ENCODE measurements at regions of chr2 and their contacts with region 1.

Region 1: GRCh38 chr2:26033818-26034636 is at the start of gene RAB10:
- DNase-seq: peak; percentile 99
- ATAC-seq: peak; percentile 94
- H3K4me3 Mint-ChIP-seq: peak within 1 kb of the TSS; percentile 90
- H3K27ac Mint-ChIP-seq: peak within 1 kb of the TSS; percentile 92
- H3K4me1 Mint-ChIP-seq: peaks cover 39% of the 10 kb centered on the region
- H3K27me3 Mint-ChIP-seq: no peaks in the 10 kb centered on the region
- CTCF ChIP-seq: no peak
- total RNA-seq, gene RAB10: 79.3 and 94.6 TPM in 2 replicates

Region 2: DNA sequence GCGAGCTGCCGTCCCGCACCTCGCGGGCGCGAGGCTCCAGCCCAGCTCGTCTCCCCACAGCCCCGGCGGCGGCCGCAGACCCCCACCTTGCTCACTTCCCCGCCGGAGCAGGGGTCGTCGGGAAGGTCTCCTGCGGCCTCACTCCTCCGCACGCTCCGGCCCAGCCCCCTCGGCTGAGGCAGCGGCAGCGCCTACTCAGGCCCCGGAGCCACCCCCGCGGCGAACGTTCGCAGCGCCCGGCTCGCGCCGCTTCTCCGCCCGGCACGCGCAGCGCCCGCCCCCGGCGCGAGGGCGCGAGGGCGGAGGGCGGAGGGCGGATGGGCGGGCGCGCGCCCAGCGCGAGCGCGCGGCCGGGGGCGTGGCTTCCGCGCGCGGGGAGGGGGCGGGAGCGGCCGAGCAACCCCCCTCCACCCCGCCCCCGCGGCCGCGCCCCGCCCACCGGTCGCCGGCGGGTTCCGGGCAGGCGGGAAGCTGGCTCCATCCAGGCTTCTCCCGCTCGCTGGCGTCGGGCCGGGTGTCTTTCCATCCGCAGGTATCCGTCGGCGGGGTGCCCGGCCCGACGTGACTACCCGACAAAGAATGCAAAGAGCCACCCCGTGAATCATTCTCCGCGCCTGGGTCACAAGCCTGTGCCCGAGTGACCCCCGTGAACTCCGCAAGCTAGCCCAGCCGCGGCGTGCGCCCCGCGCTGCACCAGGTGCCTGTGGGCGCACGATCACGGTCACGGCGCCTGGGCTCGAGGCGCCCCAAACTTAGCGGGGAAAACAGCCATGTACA is 360.5 kb before region 1 on chr2 and contains the start of gene DTNB:
- CTCF ChIA-PET with region 1: no interaction called
- POLR2A ChIA-PET with region 1: no interaction called
- intact Hi-C with region 1: loop called (anchors 1 kb)
- DNase-seq: peak; percentile 83
- ATAC-seq: peak; percentile 79
- H3K4me3 Mint-ChIP-seq: peak within 1 kb of the TSS; percentile 88
- H3K27ac Mint-ChIP-seq: peak within 1 kb of the TSS; percentile 72
- H3K4me1 Mint-ChIP-seq: peaks cover 15% of the 10 kb centered on the region
- H3K27me3 Mint-ChIP-seq: no peaks in the 10 kb centered on the region
- CTCF ChIP-seq: no peak
- total RNA-seq, gene DTNB: 18.3 and 28.9 TPM in 2 replicates

Region 3: GRCh38 chr2:25982273-25982967 is 51.6 kb before region 1 on chr2 and contains the start of gene KIF3C:
- CTCF ChIA-PET with region 1: no interaction called
- POLR2A ChIA-PET with region 1: interaction called, 3 read pairs
- intact Hi-C with region 1: loop called (anchors 1 kb)
- DNase-seq: peak; percentile 60
- ATAC-seq: peak; percentile 86
- H3K4me3 Mint-ChIP-seq: peak within 1 kb of the TSS; percentile 86
- H3K27ac Mint-ChIP-seq: peak within 1 kb of the TSS; percentile 18
- H3K4me1 Mint-ChIP-seq: no peaks in the 10 kb centered on the region
- H3K27me3 Mint-ChIP-seq: no peaks in the 10 kb centered on the region
- CTCF ChIP-seq: no peak
- total RNA-seq, gene KIF3C: 1.5 and 1.8 TPM in 2 replicates

Region 4: GRCh38 chr2:26043862-26044696 is 10.1 kb after region 1 on chr2:
- CTCF ChIA-PET with region 1: no interaction called
- POLR2A ChIA-PET with region 1: interaction called, 8 read pairs
- intact Hi-C with region 1: loop called (anchors 1 kb)
- DNase-seq: no peak
- ATAC-seq: peak; percentile 45
- H3K4me3 Mint-ChIP-seq: peak overlapping the region; percentile 26
- H3K27ac Mint-ChIP-seq: peak overlapping the region; percentile 50
- H3K4me1 Mint-ChIP-seq: peaks cover 66% of the 10 kb centered on the region
- H3K27me3 Mint-ChIP-seq: no peaks in the 10 kb centered on the region
- CTCF ChIP-seq: no peak

Region 5: DNA sequence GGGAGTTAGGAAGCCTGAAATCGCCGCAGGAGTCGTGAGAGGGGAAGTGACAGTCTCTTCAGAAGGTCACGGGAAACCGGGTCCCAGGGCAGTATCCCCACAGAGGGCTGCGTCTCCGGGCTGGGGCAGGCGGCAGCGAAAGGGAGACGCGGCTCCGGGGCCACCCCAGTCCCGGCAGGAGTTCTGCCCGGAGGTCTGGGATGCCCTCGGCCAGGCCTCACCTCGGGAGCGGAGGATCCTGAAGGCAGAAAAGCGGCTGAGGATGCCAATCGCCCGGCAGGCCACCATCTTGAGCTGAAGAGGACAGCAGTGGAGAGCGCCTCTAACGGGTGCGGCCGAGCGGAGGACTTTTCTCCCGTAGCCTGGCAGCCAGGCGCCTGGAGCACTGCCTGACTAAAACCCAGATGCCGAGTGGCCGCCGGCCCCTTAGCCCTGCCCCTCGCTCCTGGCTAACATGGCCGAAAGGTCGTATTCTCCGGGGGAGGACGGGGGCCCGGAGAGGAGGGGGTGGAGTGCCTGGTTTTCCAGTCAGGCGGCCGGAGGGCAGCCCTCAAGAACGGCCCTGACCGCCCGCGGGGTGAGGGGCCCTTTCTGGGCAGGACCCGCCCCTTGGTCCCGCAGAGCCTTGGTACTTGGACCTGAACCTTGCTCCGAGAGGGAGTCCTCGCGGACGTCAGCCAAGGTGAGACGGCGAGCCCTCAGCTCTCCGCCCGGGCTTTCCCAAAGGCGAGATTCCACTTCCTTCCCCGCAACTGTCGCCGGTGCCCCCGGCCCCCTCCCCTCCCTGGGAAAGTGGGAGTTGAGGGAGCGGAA is 210.5 kb after region 1 on chr2 and contains the starts of genes HADHA and HADHB:
- CTCF ChIA-PET with region 1: no interaction called
- POLR2A ChIA-PET with region 1: interaction called, 12 read pairs
- intact Hi-C with region 1: loop called (anchors 1 kb)
- DNase-seq: peak; percentile 88
- ATAC-seq: peak; percentile 84
- H3K4me3 Mint-ChIP-seq: peak within 1 kb of the TSS; percentile 97
- H3K27ac Mint-ChIP-seq: peak within 1 kb of the TSS; percentile 100
- H3K4me1 Mint-ChIP-seq: peaks cover 72% of the 10 kb centered on the region
- H3K27me3 Mint-ChIP-seq: no peaks in the 10 kb centered on the region
- CTCF ChIP-seq: no peak
- total RNA-seq, gene HADHA: 127 and 128 TPM in 2 replicates
- total RNA-seq, gene HADHB: 62.4 and 65.6 TPM in 2 replicates

Region 6: DNA sequence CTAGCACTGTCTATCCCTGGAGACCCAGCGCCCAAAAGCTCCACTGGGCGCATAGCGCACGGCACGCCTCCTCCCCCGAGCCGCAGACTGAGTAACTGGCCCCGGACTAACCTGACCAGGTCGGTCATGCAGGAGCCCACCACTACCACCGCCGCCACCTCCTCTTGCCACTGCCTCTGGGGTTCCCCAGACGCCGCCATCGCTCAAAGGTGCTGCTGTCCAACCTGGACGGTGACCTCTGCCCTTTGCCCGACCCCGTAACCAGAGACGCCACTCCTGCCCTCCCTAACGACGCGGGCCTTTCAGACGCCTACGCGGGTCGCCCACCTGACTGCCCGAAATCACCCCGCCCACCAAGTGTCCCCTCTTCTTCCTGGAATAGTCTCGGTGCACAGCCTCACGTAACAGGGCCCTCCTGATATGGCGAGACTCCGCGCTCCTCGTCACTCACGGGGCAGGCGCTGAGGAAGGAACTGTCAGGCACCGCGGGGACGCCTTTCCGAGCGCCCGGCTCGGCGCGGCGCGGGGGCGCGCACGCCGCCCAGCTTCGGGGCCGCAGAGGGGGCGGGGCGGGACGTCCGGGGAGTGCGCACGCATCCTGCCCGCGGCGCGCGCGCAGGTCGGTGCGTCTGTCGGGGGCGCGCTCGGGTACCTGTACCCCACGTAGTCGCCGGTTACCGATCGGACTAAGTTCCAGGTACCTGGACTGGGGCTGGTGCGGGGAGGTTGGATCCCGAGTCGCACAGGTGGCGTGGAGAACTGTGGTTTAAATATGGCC is 1856.3 kb after region 1 on chr2 and contains the starts of genes BABAM2 and RBKS:
- CTCF ChIA-PET with region 1: no interaction called
- POLR2A ChIA-PET with region 1: no interaction called
- intact Hi-C with region 1: loop called (anchors 2 kb)
- DNase-seq: peak; percentile 93
- ATAC-seq: peak; percentile 78
- H3K4me3 Mint-ChIP-seq: peak within 1 kb of the TSS; percentile 99
- H3K27ac Mint-ChIP-seq: peak within 1 kb of the TSS; percentile 99
- H3K4me1 Mint-ChIP-seq: peaks cover 74% of the 10 kb centered on the region
- H3K27me3 Mint-ChIP-seq: peaks cover 2% of the 10 kb centered on the region
- CTCF ChIP-seq: no peak
- total RNA-seq, gene BABAM2: 51.9 and 55.6 TPM in 2 replicates
- total RNA-seq, gene RBKS: 2.5 and 3.1 TPM in 2 replicates